A673 (cell line): ENCODE measurements at regions of chr18 and their contacts with region 1.

Region 1: DNA sequence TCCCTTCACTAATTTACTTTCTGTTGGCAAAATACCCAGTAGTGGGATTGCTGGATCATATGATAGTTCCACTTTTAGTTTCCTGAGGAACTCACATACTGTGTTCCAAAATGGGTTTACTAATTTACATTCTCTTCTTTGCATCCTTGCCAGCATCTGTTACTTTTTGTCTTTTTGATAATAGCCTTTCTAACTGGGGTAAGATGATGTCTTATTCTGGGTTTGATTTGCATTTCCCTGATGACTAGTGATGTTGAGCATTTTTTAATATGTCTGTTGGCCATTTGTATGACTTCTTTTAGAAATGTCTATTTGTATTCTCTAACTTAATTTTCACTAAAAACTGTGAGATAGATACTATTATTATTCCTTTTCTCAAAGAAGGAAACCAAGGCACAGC is 411.7 kb downstream of the SOCS6 start:
- DNase-seq: peak; percentile 86
- H3K4me3 ChIP-seq: no peak overlapping the region
- H3K27ac ChIP-seq: peak overlapping the region; percentile 71
- H3K4me1 ChIP-seq: peaks cover 38% of the 10 kb centered on the region
- H3K27me3 ChIP-seq: no peaks in the 10 kb centered on the region
- CTCF ChIP-seq: no peak

Region 2: DNA sequence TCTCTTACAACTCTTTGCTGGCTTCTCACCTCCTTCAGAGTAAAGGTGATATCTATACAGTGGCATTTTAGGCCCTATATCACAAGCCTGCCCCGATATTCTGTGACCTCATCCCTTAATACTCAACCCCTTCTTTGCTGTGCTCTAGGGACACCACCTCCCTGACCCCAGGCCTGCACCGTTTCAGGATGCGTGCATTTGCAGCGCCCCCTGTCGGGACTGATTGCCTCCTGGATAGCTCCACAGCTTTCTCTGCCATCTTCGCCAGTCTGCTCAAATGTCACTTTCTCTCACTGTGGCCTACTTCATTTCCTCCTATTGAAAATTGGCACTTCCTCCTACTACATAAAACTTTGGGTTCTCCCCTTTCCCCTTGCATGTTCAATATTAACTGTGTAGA is 122.0 kb before region 1 on chr18:
- CTCF ChIA-PET with region 1: no interaction called
- POLR2A ChIA-PET with region 1: no interaction called
- intact Hi-C with region 1: loop called (anchors 5 kb)
- DNase-seq: peak; percentile 32
- H3K4me3 ChIP-seq: no peak overlapping the region
- H3K27ac ChIP-seq: no peak overlapping the region
- H3K4me1 ChIP-seq: peaks cover 30% of the 10 kb centered on the region
- H3K27me3 ChIP-seq: no peaks in the 10 kb centered on the region
- CTCF ChIP-seq: peak; percentile 51

Region 3: GRCh38 chr18:72544092-72544886 is 1843.8 kb after region 1 on chr18 and contains the start of gene CBLN2:
- CTCF ChIA-PET with region 1: no interaction called
- POLR2A ChIA-PET with region 1: no interaction called
- intact Hi-C with region 1: loop called (anchors 5 kb)
- DNase-seq: peak; percentile 86
- H3K4me3 ChIP-seq: peak within 1 kb of the TSS; percentile 51
- H3K27ac ChIP-seq: no peak within 1 kb of the TSS
- H3K4me1 ChIP-seq: peaks cover 7% of the 10 kb centered on the region
- H3K27me3 ChIP-seq: peaks cover 22% of the 10 kb centered on the region
- CTCF ChIP-seq: peak; percentile 84
- total RNA-seq, gene CBLN2: 7.5 and 9.7 TPM in 2 replicates